Calu3 (cell line): ENCODE measurements at regions of chr4 and their contacts with region 1.

Region 1: DNA sequence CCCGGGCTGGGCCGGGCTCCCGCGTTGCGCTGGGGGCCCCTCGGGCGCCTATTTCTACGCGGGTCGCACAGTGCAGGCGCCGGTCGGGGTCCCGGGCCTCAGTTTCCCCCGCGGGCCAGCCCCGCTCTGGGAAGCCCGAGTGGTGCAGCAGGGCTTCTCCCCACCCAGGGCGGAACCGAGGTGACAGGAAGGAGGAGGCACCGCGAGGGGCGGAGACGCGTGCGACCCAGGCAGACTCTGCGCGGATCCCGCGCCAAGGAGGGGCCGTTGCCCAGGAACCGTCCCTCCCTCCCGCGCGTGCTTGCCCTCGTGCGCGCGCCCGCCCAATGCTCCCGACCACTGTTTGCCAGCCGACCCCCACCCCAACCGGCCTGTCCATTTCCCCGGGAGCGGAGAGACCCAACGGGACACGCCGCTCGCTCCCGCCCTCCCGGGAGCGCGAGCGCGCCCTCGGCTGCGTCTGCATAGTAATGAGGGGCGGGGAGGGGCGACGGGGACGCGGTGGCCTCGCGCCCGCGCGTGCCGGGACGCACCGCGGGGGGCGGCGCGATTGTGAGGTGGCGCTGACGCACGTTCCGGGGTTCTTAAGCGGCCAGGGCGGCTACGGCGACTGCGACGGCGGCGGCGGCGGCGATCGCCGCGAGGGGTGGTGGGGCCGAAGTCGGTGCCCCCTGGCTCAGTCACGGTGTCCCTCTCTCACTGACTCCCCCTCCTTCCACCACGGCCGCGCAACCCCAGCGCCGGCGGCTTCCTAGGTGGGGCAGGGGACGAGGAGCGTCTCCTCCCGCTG is at the start of gene CPEB2:
- DNase-seq: peak; percentile 91
- H3K4me3 Mint-ChIP-seq: peak within 1 kb of the TSS; percentile 76
- H3K27ac Mint-ChIP-seq: peak within 1 kb of the TSS; percentile 47
- H3K4me1 Mint-ChIP-seq: no peaks in the 10 kb centered on the region
- H3K27me3 Mint-ChIP-seq: no peaks in the 10 kb centered on the region
- CTCF ChIP-seq: no peak
- total RNA-seq, gene CPEB2: 6.6 and 7.3 TPM in 2 replicates

Region 2: DNA sequence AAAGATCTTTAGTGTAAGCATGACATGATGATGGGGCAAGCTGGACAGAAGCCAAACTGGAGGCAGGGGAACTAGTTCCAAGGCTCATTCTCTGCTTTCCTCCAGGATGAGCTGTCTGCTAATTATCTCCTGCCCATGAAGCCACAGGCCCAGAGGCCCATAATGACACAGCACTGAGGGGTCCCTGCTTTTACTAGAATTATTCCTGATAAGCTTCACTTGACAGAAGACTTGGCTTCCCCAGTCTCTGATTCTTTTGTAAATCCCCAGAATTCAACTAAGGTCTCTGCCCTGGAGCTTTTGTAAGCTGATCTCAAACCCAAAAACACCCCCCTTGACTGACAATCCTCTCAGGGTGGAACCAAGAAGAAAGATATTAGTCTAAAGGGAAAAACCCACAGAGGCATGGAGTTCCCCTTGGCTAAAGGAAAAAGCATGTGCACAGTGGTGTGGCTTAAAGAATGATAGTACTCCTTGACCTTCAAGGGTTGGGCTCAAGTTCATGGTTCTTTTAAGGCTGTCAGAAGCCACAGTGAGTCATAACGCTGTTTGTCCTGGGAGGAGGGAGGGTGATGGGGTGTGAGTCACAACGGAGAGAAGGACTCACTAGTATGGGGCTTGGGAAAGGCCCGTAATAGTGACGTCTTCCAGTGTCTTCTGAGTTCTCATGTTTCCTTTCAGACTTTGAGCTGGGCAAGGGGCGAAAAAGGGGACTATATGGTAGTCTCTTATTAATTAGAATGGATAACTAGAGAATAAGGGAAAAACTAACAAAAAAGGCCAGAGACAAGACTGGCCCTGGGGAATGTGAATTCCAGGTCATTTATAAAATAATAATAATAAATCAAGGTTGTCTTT is 145.8 kb before region 1 on chr4:
- CTCF ChIA-PET with region 1: no interaction called
- intact Hi-C with region 1: no loop called
- DNase-seq: peak; percentile 67
- H3K4me3 Mint-ChIP-seq: no peak overlapping the region
- H3K27ac Mint-ChIP-seq: peak overlapping the region; percentile 66
- H3K4me1 Mint-ChIP-seq: peaks cover 18% of the 10 kb centered on the region
- H3K27me3 Mint-ChIP-seq: no peaks in the 10 kb centered on the region
- CTCF ChIP-seq: no peak

Region 3: DNA sequence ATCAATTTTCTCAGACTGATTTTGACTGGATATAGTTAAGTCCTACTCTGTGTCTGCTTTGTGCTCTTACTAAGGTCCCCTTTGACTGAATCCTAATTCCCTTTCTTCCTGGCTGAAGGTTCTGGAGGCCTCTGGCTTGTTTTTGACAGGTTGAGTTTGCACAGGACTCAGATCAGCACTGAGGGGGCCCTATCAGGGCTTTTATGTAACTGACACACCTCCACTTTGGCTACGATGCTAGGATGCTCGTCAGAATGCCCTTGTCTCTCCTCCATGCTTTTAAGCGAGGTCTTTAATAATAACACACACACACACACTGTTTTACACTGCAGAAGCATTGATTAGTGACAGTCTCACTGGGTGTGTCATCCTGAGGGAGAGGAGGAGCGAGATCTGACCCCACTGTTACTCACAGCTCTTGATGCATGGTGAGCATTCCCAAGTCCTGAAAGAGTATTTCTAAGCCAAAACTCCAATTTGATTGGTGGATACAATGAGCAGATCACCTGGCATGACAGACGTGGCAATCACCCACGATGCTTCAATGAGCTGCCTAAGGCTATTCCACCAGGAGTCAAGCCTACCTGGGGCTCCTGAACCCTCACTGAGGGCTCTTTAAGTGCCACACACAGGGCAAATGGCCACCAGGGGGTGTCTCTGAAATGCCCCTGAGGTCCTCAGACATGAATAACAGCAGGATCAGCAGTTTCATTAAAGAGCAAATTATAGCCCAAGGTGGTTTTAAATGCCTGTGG is 130.2 kb before region 1 on chr4:
- CTCF ChIA-PET with region 1: no interaction called
- intact Hi-C with region 1: loop called (anchors 2 kb)
- DNase-seq: peak; percentile 52
- H3K4me3 Mint-ChIP-seq: no peak overlapping the region
- H3K27ac Mint-ChIP-seq: no peak overlapping the region
- H3K4me1 Mint-ChIP-seq: no peaks in the 10 kb centered on the region
- H3K27me3 Mint-ChIP-seq: no peaks in the 10 kb centered on the region
- CTCF ChIP-seq: peak; percentile 50

Region 4: DNA sequence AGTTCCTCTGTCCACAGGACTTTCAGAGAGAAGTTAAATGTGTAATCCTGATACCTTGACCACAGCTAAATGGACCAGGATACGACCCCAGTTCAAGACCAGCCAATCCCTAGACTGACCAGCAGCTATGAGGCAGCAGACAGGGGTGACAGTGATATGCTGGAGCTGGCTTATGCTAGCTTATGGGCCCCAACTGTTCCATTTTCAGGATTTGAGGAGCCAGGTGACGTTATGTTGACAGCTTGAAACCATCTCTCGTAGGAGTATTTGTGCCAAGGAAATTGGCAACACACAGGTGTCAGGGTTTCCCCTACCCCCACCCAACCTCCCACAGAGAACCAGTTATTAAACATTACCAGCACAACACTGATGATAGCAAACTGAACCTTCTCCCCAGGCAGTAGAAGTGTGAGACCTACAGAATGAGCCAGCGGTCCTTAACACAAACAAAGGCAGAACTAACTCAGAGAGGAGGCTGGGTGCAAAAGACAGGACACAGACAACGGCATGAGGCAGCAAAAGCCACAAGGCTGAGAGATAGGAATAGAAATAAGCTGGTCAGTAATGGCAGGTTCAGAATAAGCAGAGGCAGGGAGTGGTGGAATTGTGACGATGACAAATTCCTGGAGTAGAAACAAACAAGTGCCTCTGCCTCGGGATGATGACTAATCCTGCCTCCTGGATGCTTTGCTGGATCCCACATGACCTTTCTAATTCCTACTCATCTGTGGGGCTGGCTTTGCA is 85.3 kb before region 1 on chr4:
- CTCF ChIA-PET with region 1: no interaction called
- intact Hi-C with region 1: loop called (anchors 10 kb)
- DNase-seq: peak; percentile 22
- H3K4me3 Mint-ChIP-seq: peak overlapping the region; percentile 49
- H3K27ac Mint-ChIP-seq: peak overlapping the region; percentile 51
- H3K4me1 Mint-ChIP-seq: peaks cover 23% of the 10 kb centered on the region
- H3K27me3 Mint-ChIP-seq: no peaks in the 10 kb centered on the region
- CTCF ChIP-seq: no peak